IMR-90 (cell line): ENCODE measurements at regions of chr14 and their contacts with region 1.

Region 1: DNA sequence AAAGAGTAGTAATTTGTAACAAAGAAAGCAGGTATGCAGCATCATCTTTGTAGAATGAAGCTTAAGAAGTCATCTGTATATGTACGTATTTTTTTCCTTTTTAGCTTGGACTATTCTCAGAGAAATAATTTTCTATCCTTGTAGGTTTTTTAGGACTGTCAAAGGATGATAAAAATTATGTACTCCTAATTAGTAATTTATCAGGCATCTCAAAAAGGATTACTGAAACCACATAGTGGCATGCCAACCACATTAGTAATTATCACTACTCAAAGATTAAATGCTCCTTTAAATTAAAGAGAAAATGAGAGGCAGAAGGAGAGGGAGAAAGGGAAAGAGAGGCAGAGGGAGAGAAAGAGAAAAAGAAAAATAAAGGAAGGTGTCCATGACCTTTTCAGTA is 17.3 kb downstream of the TTC8 start:
- DNase-seq: peak; percentile 48
- ATAC-seq: peak; percentile 46
- H3K4me3 ChIP-seq: no peak overlapping the region
- H3K27ac ChIP-seq: no peak overlapping the region
- H3K4me1 ChIP-seq: peaks cover 9% of the 10 kb centered on the region; the same call in 1 of the 2 replicates
- H3K27me3 ChIP-seq: no peaks in the 10 kb centered on the region
- CTCF ChIP-seq: no peak
- POLR2A ChIP-seq: no peak
- RAD21 ChIP-seq: no peak

Region 2: GRCh38 chr14:88683119-88683518 is 158.6 kb before region 1 on chr14:
- CTCF ChIA-PET with region 1: no interaction called
- POLR2A ChIA-PET with region 1: no interaction called
- dilution Hi-C with region 1: no loop called
- in situ Hi-C with region 1: no loop called
- intact Hi-C with region 1: no loop called
- DNase-seq: no peak
- ATAC-seq: no peak
- H3K4me3 ChIP-seq: no peak overlapping the region
- H3K27ac ChIP-seq: no peak overlapping the region
- H3K4me1 ChIP-seq: no peaks in the 10 kb centered on the region
- H3K27me3 ChIP-seq: no peaks in the 10 kb centered on the region
- CTCF ChIP-seq: no peak
- POLR2A ChIP-seq: no peak
- RAD21 ChIP-seq: no peak

Region 3: DNA sequence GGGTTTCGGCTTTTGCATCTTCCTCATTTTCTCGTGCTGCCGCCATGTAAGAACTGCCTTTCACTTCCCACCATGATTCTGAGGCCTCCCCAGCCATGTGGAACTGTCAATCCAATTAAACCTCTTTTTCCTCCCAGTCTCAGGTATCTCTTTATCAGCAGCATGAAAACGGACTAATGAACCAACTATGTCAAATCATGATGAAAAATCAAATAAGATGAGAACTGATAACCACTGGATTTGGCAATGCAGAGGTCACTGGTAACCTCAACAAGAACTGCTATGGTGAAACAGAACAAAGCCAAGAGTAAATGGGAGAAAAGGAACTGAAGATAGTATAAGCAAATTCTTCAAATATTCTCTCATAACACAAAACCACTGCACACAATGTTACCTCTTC is 55.0 kb before region 1 on chr14:
- CTCF ChIA-PET with region 1: no interaction called
- POLR2A ChIA-PET with region 1: no interaction called
- dilution Hi-C with region 1: no loop called
- in situ Hi-C with region 1: no loop called
- intact Hi-C with region 1: no loop called
- DNase-seq: no peak
- ATAC-seq: no peak
- H3K4me3 ChIP-seq: no peak overlapping the region
- H3K27ac ChIP-seq: no peak overlapping the region
- H3K4me1 ChIP-seq: no peaks in the 10 kb centered on the region; the same call in 1 of the 2 replicates
- H3K27me3 ChIP-seq: no peaks in the 10 kb centered on the region
- CTCF ChIP-seq: no peak
- POLR2A ChIP-seq: no peak
- RAD21 ChIP-seq: no peak

Region 4: DNA sequence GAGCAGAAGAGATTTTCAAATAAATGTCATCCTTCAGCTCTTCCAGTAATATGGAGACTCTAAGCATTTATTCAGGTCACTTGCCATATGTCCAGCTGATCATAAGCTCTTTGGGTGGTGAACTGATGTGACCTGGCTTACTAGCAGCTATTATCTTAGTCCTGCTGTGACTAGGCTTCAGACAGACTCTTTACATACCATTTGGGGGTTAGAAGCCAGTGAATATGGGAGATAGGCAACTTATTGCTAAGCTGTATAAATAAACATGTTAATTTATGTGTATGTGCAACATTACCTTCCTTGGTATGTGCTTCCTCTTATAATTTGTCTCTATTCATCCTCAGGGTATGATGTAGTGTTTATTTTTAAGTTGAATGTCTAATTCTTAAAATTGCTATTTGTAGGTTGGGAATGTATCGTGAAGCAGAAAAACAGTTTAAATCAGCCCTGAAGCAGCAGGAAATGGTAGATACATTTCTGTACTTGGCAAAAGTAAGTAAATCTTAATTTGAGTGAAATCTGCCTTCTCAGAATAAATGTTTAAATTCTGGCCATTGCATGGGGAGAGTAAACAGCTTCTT is 15.1 kb after region 1 on chr14:
- CTCF ChIA-PET with region 1: interaction called, 3 read pairs
- POLR2A ChIA-PET with region 1: interaction called, 20 read pairs
- dilution Hi-C with region 1: no loop called
- in situ Hi-C with region 1: no loop called
- intact Hi-C with region 1: no loop called
- DNase-seq: peak; percentile 72
- ATAC-seq: peak; percentile 91
- H3K4me3 ChIP-seq: no peak overlapping the region
- H3K27ac ChIP-seq: no peak overlapping the region
- H3K4me1 ChIP-seq: peaks cover 5% of the 10 kb centered on the region; the same call in 1 of the 2 replicates
- H3K27me3 ChIP-seq: no peaks in the 10 kb centered on the region
- CTCF ChIP-seq: no peak
- POLR2A ChIP-seq: no peak
- RAD21 ChIP-seq: no peak